Activated T-helper 2 cell treated with anti-CD3 and anti-CD28 coated beads, Interferon-gamma antibody, Interleukin-2, Interleukin-4, amounts not matched to agents 10 μg/mL and 5 μg/mL and 100 μg/mL, durations not matched to agents 14 hours and 24 hours and 36 hours (primary cell): ENCODE measurements at regions of chr11 and their contacts with region 1.

Region 1: DNA sequence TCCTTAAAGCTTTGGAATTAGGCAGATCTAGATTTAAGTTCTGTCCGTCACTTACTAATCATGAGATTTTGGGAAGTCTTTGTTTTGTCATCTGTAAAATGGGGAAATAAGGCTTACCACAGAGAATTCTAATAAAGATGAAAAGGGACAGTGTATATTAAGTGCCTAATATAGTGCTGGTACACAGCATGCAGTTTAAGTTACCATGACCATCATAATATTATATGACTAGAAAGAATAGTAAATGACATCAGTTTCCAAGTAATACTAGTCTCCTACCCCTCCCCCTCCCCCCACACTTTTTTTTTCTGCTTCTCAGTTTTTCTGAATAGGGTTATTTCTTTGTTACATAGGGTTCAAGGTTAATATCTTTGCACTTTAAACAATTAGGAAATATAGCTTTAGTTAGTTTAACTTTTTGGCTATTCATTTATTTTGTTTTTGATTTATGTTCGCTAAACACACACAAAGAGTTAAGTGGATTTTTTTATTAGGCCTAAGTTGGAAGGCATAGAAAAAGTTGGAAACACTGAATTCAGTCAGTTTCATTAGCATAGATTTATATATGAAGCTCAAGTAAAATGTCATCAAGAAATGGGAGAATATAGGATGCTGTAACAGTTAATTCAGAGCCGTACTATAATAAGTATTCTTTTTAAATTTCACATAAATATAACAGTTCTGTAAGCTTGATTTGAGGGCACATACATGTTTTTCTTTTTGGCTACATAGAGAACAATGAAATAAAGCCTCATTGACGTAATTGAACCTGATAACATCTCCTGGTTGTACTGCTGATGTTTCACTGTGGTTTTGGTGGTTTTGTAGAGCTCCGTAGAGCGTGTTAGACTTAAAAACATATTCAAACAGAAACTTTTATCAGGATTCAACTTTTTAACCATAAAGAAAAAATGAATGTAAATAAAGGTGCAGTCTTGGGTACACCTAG is 121.2 kb downstream of the PDE3B start:
- DNase-seq: peak; percentile 46
- H3K4me3 Mint-ChIP-seq: peak overlapping the region; percentile 64
- H3K27ac Mint-ChIP-seq: no peak overlapping the region
- H3K4me1 Mint-ChIP-seq: peaks cover 36% of the 10 kb centered on the region
- H3K27me3 Mint-ChIP-seq: no peaks in the 10 kb centered on the region

Region 2: DNA sequence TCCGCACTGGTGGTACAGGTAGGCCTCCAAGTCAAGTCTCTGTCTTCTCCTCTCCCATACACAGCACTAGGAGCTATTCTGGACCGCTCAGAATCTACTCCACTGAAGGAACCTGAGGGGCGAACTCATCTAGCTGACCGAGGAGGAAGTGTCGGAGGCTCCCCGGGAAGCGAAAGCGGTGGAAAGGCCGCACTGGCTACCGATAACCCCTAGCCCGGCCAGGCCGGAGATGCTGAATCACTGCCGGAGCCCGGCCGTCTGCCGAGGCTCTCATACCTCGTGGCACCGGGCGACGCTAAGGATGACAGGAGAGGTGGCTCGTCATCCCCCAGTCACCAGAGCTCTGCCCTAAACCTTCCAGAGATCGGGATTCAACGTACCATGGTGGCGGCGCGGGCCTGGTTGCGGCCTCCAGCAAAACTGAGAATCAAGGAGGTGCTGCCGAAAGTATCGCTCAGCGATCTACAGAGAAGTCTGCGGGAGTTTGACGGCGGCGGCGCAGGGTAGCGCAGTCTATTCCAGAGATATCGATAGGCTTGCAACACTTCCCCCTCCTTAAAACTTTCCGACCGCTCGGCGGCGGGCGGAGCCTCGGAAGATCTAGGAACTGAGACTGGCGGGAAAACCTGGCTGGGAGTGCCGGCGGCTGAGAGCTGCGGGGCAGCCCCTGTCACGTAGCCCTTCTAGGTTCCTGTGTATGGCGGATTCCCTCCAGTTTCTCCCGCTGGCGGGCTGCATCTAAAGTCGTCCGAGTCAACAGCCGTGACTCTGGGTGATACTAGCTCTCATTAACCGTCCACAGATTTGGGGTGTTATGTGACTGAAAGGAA is 244.7 kb before region 1 on chr11 and contains the start of gene PSMA1:
- intact Hi-C with region 1: loop called (anchors 1 kb)
- DNase-seq: peak; percentile 92
- H3K4me3 Mint-ChIP-seq: peak within 1 kb of the TSS; percentile 90
- H3K27ac Mint-ChIP-seq: peak within 1 kb of the TSS; percentile 89
- H3K4me1 Mint-ChIP-seq: peaks cover 27% of the 10 kb centered on the region
- H3K27me3 Mint-ChIP-seq: no peaks in the 10 kb centered on the region
- total RNA-seq, gene PSMA1: 319 and 329 TPM in 2 replicates

Region 3: GRCh38 chr11:14544611-14545010 is 220.2 kb before region 1 on chr11:
- intact Hi-C with region 1: loop called (anchors 2 kb)
- DNase-seq: no peak
- H3K4me3 Mint-ChIP-seq: no peak overlapping the region
- H3K27ac Mint-ChIP-seq: peak overlapping the region; percentile 80
- H3K4me1 Mint-ChIP-seq: peaks cover 42% of the 10 kb centered on the region
- H3K27me3 Mint-ChIP-seq: no peaks in the 10 kb centered on the region

Region 4: DNA sequence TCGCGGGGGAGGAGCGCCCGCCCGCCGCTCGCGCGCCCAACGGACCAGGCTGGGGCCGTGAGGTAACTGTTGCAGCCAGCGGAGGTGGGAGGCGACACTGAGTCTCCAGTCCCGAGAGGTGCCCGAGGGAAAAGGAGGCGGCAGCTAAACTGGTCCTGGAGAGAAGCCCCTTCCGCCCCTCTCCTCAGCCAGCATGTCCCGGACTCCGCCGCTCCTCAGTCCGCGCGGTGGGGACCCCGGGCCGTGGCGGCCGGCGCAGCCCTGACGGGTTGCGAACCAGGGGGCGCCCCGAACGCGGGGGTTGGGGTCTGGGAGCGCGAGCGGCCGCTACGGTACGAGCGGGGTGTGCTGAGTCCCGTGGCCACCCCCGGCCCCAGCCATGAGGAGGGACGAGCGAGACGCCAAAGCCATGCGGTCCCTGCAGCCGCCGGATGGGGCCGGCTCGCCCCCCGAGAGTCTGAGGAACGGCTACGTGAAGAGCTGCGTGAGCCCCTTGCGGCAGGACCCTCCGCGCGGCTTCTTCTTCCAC is 121.1 kb before region 1 on chr11 and contains the start of gene PDE3B:
- intact Hi-C with region 1: loop called (anchors 1 kb)
- DNase-seq: peak; percentile 75
- H3K4me3 Mint-ChIP-seq: peak within 1 kb of the TSS; percentile 93
- H3K27ac Mint-ChIP-seq: peak within 1 kb of the TSS; percentile 87
- H3K4me1 Mint-ChIP-seq: peaks cover 46% of the 10 kb centered on the region
- H3K27me3 Mint-ChIP-seq: no peaks in the 10 kb centered on the region
- total RNA-seq, gene PDE3B: 58.8 and 62.1 TPM in 2 replicates

Region 5: GRCh38 chr11:14784230-14784629 is 19.4 kb after region 1 on chr11:
- intact Hi-C with region 1: loop called (anchors 2 kb)
- DNase-seq: no peak
- H3K4me3 Mint-ChIP-seq: no peak overlapping the region
- H3K27ac Mint-ChIP-seq: peak overlapping the region; percentile 64
- H3K4me1 Mint-ChIP-seq: peaks cover 26% of the 10 kb centered on the region
- H3K27me3 Mint-ChIP-seq: no peaks in the 10 kb centered on the region

Region 6: GRCh38 chr11:14892036-14892567 is 127.2 kb after region 1 on chr11 and contains the start of gene CYP2R1:
- intact Hi-C with region 1: loop called (anchors 1 kb)
- DNase-seq: peak; percentile 89
- H3K4me3 Mint-ChIP-seq: peak within 1 kb of the TSS; percentile 88
- H3K27ac Mint-ChIP-seq: peak within 1 kb of the TSS; percentile 98
- H3K4me1 Mint-ChIP-seq: peaks cover 53% of the 10 kb centered on the region
- H3K27me3 Mint-ChIP-seq: no peaks in the 10 kb centered on the region
- total RNA-seq, gene CYP2R1: 18.2 and 20.8 TPM in 2 replicates

Region 7: DNA sequence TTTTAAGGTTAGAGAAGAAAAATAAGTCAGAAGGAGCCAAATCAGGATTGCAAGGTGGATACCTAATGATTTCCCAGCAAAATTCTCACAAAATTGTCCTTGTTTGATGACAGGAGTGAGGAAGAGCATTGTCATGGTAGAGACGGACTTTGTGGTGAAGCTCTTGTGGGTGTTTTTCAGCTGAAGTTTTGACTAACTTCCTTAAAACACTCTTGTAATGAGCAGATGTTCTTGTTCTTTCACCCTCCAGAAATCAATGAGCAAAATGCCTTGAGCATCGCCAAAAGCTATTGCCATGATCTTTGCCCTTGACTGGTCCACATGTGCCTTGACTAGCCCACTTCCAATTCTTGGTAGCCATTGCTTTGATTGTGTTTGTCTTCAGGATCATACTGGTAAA is 328.6 kb after region 1 on chr11:
- intact Hi-C with region 1: no loop called
- DNase-seq: no peak
- H3K4me3 Mint-ChIP-seq: no peak overlapping the region
- H3K27ac Mint-ChIP-seq: no peak overlapping the region
- H3K4me1 Mint-ChIP-seq: peaks cover 2% of the 10 kb centered on the region
- H3K27me3 Mint-ChIP-seq: peaks cover 12% of the 10 kb centered on the region